Activated naive CD8-positive, alpha-beta T cell treated with anti-CD3 and anti-CD28 coated beads, Interleukin-2, amount 10 ng/mL, durations not matched to agents 7 days and 5 days (primary cell): ENCODE measurements at regions of chr19 and their contacts with region 1.

Region 1: DNA sequence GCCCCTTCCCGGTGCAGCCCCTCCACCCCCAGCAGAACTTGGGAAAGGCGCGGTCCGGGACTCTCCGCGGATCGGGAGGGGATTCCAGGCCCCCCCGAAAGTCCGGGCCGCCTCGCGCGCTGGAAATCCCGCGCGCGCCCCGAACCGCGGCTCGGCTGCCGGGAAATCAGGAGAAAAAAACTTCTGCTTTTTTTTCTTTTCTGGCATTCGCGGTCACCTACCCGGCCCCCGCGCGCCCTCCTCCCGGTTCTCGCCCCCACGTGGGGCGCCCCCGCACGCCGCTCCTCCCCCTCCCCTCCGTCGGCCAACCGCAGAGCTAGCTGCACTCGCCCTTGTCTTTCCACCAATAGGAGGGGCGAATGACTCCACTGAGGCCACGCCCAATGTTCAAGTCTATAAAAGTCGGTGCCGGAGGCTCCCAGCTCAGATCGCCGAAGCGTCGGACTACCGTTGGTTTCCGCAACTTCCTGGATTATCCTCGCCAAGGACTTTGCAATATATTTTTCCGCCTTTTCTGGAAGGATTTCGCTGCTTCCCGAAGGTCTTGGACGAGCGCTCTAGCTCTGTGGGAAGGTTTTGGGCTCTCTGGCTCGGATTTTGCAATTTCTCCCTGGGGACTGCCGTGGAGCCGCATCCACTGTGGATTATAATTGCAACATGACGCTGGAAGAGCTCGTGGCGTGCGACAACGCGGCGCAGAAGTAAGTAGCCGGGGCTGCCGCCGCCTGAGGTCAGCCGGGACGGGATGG is at the start of gene GADD45B:
- DNase-seq: peak; percentile 98
- ATAC-seq: peak; percentile 46
- H3K4me3 Mint-ChIP-seq: peak within 1 kb of the TSS; percentile 94
- H3K27ac Mint-ChIP-seq: peak within 1 kb of the TSS; percentile 87
- H3K4me1 Mint-ChIP-seq: peaks cover 10% of the 10 kb centered on the region
- H3K27me3 Mint-ChIP-seq: no peaks in the 10 kb centered on the region
- total RNA-seq, gene GADD45B: 83.1 to 85.4 TPM

Region 2: DNA sequence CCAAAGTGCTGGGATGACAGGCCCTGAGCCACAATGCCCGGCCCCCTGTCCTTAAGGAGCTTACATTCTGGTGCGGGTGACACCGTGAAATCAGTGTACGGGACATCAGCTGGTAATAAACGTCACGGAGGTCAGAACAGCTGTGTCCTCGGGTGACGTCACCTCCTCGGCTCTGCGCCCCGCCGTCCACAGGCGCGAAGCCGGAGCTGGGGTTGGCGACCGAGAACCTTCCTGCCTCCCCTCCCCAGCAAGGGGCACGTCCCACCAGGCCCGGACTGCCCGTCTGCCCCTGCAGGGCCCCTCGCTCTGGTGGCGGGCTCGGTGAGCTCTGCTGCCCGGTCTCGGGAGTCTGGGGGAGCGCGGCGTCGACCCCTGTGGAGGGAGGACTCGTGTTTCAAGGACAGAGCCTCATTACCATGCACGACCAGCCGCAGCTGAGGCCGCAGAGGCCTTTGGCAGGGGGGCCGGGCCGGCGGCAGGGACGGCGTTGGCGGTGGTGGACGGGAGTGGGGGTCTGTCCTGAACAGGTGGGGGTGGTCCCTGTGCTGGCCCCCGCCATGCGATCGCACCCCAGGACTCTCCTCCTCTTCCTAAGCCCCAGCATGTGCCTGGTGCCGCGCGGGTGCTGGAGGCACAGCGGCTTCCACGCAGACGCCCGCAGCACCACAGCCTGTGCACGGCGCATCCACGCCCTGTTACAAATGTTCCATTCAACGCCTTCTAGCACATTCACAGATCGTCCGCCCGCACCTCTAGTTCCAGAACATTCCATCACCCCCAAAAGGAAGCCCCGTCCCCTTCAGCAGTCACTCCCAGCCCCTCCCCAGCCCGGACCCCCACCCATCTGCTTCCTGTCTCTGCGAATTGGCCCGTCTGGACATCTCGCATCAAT is 173.3 kb before region 1 on chr19:
- POLR2A ChIA-PET with region 1: no interaction called
- DNase-seq: no peak
- ATAC-seq: peak; percentile 21
- H3K4me3 Mint-ChIP-seq: no peak overlapping the region
- H3K27ac Mint-ChIP-seq: no peak overlapping the region
- H3K4me1 Mint-ChIP-seq: peaks cover 4% of the 10 kb centered on the region
- H3K27me3 Mint-ChIP-seq: peaks cover 41% of the 10 kb centered on the region

Region 3: GRCh38 chr19:2434565-2435265 is 41.2 kb before region 1 on chr19:
- POLR2A ChIA-PET with region 1: no interaction called
- DNase-seq: no peak
- ATAC-seq: no peak
- H3K4me3 Mint-ChIP-seq: no peak overlapping the region
- H3K27ac Mint-ChIP-seq: no peak overlapping the region
- H3K4me1 Mint-ChIP-seq: no peaks in the 10 kb centered on the region
- H3K27me3 Mint-ChIP-seq: no peaks in the 10 kb centered on the region

Region 4: GRCh38 chr19:2455851-2456570 is 19.9 kb before region 1 on chr19:
- POLR2A ChIA-PET with region 1: interaction called, 50 read pairs
- DNase-seq: peak; percentile 69
- ATAC-seq: peak; percentile 38
- H3K4me3 Mint-ChIP-seq: peak overlapping the region; percentile 85
- H3K27ac Mint-ChIP-seq: peak overlapping the region; percentile 82
- H3K4me1 Mint-ChIP-seq: peaks cover 8% of the 10 kb centered on the region
- H3K27me3 Mint-ChIP-seq: no peaks in the 10 kb centered on the region

Region 5: GRCh38 chr19:2494444-2495129 is 18.7 kb after region 1 on chr19:
- POLR2A ChIA-PET with region 1: interaction called, 63 read pairs
- DNase-seq: peak; percentile 72
- ATAC-seq: peak; percentile 79
- H3K4me3 Mint-ChIP-seq: peak overlapping the region; percentile 79
- H3K27ac Mint-ChIP-seq: peak overlapping the region; percentile 60
- H3K4me1 Mint-ChIP-seq: peaks cover 19% of the 10 kb centered on the region
- H3K27me3 Mint-ChIP-seq: peaks cover 34% of the 10 kb centered on the region

Region 6: GRCh38 chr19:2543463-2544442 is 67.9 kb after region 1 on chr19:
- POLR2A ChIA-PET with region 1: interaction called, 75 read pairs
- DNase-seq: peak; percentile 76
- ATAC-seq: peak; percentile 91
- H3K4me3 Mint-ChIP-seq: peak overlapping the region; percentile 75
- H3K27ac Mint-ChIP-seq: peak overlapping the region; percentile 90
- H3K4me1 Mint-ChIP-seq: peaks cover 15% of the 10 kb centered on the region
- H3K27me3 Mint-ChIP-seq: no peaks in the 10 kb centered on the region

Region 7: DNA sequence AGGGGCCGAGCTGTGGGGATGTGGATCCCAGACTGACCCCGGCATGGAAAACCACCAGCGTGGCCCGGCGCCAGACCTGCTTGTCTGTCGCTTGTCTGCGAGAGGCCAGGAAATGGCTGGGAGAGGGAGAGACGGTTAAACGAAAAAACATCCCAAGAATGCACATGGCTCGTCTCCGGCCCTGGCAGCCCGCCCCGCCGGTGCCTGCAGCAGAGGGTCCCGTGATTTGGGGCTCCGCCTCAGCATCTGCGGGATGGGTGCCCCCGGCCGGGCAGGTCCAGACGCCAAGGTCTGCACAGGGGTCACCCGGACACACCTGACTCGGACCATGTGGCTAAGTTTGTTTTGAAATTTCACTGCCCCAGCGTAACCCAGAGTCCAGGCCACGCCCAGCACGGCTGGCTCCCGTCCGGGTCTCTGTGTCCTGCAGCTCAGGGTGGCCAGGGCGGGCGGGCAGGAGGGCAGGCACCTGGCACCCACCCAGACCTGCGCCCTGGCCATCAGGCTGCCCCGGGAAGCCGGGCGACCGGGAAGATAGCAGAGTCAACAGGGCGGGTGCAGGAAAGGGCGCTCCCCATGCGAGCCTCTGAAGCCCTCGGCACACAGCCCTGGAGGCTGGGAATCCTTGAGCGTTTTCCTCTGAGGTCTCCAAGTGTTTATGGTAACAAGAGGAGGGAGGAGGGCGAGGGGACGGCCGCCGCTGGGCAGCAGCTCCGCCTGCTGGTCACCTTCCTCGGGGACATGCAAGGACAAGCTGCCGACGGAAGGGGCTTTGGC is 103.2 kb after region 1 on chr19:
- POLR2A ChIA-PET with region 1: interaction called, 150 read pairs
- DNase-seq: peak; percentile 79
- ATAC-seq: peak; percentile 70
- H3K4me3 Mint-ChIP-seq: peak overlapping the region; percentile 58
- H3K27ac Mint-ChIP-seq: peak overlapping the region; percentile 71
- H3K4me1 Mint-ChIP-seq: peaks cover 4% of the 10 kb centered on the region
- H3K27me3 Mint-ChIP-seq: peaks cover 6% of the 10 kb centered on the region

Region 8: DNA sequence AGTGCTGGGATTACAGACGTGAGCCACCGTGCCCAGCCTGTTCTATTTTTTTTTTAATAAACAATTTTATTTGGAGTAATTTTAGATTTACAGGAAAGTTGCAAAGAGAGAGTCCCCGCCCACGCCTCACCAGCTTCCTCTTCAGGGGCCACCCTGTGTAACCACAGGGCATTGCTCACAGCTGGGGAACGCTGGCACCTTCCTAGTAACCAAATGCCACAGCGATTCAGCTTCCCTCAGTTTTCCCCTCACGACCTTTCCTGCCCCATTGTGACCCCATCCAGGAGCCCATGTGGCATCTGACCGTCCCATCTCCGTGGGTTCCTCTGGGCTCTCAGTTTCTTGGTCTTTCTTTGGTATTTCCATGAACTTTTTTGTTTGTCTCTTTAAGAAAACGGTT is 142.7 kb after region 1 on chr19:
- POLR2A ChIA-PET with region 1: interaction called, 207 read pairs
- DNase-seq: peak; percentile 55
- ATAC-seq: no peak
- H3K4me3 Mint-ChIP-seq: peak overlapping the region; percentile 64
- H3K27ac Mint-ChIP-seq: peak overlapping the region; percentile 94
- H3K4me1 Mint-ChIP-seq: peaks cover 62% of the 10 kb centered on the region
- H3K27me3 Mint-ChIP-seq: no peaks in the 10 kb centered on the region